Right ventricle myocardium inferior (tissue), 1 donor: ENCODE measurements at regions of chr12 and their contacts with region 1.

Region 1: GRCh38 chr12:50111693-50112455 is at the start of gene COX14:
- DNase-seq: peak; percentile 99
- ATAC-seq: peak; percentile 92
- total RNA-seq, gene COX14: 234 TPM

Region 2: GRCh38 chr12:50084775-50085614 is 26.9 kb before region 1 on chr12 and contains the start of gene SMARCD1:
- intact Hi-C with region 1: loop called (anchors 1 kb)
- DNase-seq: peak; percentile 96
- ATAC-seq: peak; percentile 95
- total RNA-seq, gene SMARCD1: 20.1 TPM

Region 3: DNA sequence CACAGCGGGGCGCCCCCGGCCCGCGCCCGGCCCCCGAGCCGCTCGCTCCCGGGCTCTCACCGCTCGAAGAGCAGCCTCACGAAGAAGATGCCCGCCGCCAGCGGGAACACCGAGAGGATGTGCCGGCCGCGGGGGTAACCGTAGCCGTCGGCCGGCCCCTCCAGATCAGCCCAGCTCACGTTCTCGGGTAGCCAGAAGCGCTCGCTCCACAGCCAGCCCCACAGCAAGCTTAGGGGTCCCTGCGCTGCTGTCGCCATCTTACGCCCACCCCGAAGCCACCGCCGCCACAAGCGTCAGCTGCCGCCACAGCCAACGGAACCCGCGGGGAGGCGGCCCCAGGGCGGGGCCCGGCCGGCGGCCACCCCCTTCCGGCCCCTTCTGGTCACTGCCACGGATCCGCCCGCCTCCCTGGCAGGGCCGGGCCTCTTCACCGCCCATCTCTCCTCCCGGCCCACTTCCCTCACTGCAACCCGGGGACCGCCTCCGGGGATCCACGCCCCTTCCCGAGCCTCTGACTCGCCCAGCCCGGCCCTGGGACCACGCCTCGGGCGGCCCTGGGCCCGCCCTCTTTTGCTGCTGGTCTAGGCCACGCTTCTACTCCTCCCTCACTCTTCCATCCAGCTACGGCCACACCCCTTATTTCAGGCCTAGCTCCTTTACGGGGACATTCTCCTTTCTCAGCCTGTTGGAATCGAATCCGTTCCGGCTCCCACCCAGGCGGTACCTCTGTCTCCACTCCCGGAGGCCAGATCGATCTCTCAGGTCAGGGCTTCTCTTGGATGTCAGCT is 55.4 kb after region 1 on chr12 and contains the start of gene CERS5:
- intact Hi-C with region 1: loop called (anchors 2 kb)
- DNase-seq: peak; percentile 99
- ATAC-seq: peak; percentile 100
- total RNA-seq, gene CERS5: 9.6 TPM

Region 4: GRCh38 chr12:50400598-50401364 is 288.9 kb after region 1 on chr12 and contains the start of gene LARP4:
- intact Hi-C with region 1: loop called (anchors 5 kb)
- DNase-seq: peak; percentile 94
- ATAC-seq: peak; percentile 99
- total RNA-seq, gene LARP4: 53.3 TPM